PC-9 (cell line): ENCODE measurements at regions of chr22 and their contacts with region 1.

Region 1: GRCh38 chr22:44648818-44649565 is 53.0 kb upstream of the PRR5 start:
- DNase-seq: no peak
- H3K4me3 ChIP-seq: no peak overlapping the region
- H3K27ac ChIP-seq: no peak overlapping the region
- H3K4me1 ChIP-seq: no peaks in the 10 kb centered on the region
- H3K27me3 ChIP-seq: peaks cover 78% of the 10 kb centered on the region
- CTCF ChIP-seq: no peak

Region 2: DNA sequence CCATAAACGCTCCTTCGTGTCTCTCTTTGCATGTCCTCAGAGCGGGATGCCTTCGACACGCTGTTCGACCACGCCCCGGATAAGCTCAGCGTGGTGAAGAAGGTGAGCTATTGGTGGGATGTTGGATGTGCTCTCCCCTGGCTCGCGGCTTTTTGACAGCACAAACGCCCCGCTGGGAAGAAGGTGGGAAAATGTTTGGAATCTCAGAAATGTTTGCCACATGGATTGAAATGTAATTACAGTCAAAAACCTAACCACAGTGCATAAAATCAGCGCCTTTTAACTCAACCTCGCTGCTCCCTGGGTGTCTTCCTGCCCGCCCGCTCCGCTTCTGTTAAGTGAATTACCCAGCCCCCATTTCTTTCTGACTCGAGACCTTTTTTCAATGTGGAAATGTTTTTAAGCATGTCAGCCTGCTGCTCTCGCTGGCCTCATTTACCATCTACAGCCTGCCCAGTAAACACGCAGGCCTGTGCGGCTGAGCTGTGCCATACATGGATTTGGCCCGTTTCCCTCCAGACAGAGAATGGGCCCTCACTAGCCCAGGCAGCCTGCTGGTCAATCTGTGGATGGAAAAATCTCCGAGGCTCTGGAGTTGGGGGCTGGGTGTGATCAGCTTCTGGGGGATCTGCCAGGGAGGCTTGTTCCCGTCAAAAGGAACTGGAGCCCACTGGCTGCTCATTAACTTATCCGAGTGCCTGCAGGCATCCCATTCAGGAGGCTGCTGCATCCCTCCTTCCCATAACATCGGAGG is 501.0 kb before region 1 on chr22:
- CTCF ChIA-PET with region 1: no interaction called
- POLR2A ChIA-PET with region 1: interaction called, 24 read pairs
- intact Hi-C with region 1: no loop called
- DNase-seq: no peak
- H3K4me3 ChIP-seq: no peak overlapping the region
- H3K27ac ChIP-seq: no peak overlapping the region
- H3K4me1 ChIP-seq: no peaks in the 10 kb centered on the region
- H3K27me3 ChIP-seq: no peaks in the 10 kb centered on the region
- CTCF ChIP-seq: no peak